Common myeloid progenitor, CD34-positive (primary cell): ENCODE measurements at regions of chr17 and their contacts with region 1.

Region 1: GRCh38 chr17:63406689-63407330 is 39.3 kb downstream of the CYB561 start:
- DNase-seq: peak; percentile 88 to 92 (median 88)
- H3K4me3 ChIP-seq: no peak overlapping the region
- H3K27ac ChIP-seq: no peak overlapping the region
- H3K4me1 ChIP-seq: peaks cover 0 to 5% (median 2%) of the 10 kb centered on the region in 4 experiments
- H3K27me3 ChIP-seq: no peaks in the 10 kb centered on the region

Region 2: GRCh38 chr17:63082273-63082993 is 324.4 kb before region 1 on chr17:
- CTCF ChIA-PET with region 1: interaction called, 26 read pairs
- POLR2A ChIA-PET with region 1: no interaction called
- DNase-seq: peak; percentile 40 to 68 (median 59)
- H3K4me3 ChIP-seq: no peak overlapping the region
- H3K27ac ChIP-seq: no peak overlapping the region
- H3K4me1 ChIP-seq: no peaks in the 10 kb centered on the region
- H3K27me3 ChIP-seq: no peaks in the 10 kb centered on the region

Region 3: DNA sequence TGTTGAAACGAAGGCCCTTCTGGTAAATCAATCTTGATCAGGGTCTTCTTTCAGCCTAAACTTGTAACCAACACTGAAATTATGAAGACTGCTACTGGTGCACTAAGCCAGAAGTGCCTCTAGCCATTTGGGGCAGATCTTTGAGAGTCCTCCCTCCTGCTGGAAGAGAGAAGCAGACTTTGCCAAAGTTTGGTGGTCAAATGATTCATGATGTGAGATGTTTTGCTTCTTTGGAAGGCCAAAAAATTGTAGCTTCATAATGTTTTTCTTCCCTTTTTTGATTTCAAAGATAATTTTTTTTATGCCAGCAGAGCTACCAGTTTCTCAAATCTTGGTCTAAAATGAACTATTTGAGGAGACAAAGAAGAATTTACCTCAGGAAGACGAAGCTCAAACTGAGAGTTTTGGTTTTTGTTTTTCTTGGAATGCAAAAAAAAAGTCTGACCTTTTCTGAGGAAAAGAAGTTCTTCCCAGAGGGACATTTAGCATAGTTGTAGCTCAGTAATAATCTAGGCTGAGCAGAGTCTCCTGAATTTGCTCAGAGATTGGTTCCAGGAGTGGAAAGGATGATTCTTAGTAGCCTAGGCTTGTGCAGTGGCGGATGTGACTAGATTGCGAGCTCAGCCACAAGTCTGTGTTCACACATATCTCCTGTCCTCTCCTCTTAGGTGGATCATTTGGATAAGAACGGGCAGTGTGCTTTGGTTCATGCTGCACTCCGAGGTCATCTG is 11.6 kb before region 1 on chr17:
- CTCF ChIA-PET with region 1: interaction called, 10 read pairs
- POLR2A ChIA-PET with region 1: no interaction called
- DNase-seq: peak in 2 of 3 donors; percentile 35 to 55
- H3K4me3 ChIP-seq: no peak overlapping the region
- H3K27ac ChIP-seq: no peak overlapping the region
- H3K4me1 ChIP-seq: peaks cover 0 to 29% (median 10%) of the 10 kb centered on the region in 4 experiments
- H3K27me3 ChIP-seq: no peaks in the 10 kb centered on the region

Region 4: DNA sequence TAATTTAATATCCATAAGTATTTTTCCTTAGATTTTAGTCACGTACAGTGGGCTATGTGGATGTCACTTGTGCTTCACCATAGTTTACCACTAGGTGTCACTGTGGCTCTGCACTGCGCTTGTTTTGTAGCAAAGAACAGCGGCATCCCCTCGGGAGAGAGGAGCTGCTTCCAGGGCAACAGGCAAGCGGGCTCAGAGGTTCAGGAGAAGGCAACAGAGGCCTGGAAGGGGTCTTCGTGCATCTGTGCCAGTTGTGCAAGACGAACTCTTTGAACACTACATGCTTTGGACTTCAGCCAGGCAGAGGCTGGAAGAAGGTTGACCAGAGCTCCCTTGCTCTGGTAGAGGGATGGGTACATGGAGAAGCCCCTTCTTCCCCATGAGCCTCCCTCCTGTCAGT is 18.7 kb after region 1 on chr17:
- CTCF ChIA-PET with region 1: interaction called, 76 read pairs
- POLR2A ChIA-PET with region 1: no interaction called
- DNase-seq: peak; percentile 81 to 89 (median 83)
- H3K4me3 ChIP-seq: peak overlapping the region in 2 of 7 experiments; percentile 14 to 37
- H3K27ac ChIP-seq: no peak overlapping the region
- H3K4me1 ChIP-seq: peaks cover 16 to 71% (median 69%) of the 10 kb centered on the region in 4 experiments
- H3K27me3 ChIP-seq: no peaks in the 10 kb centered on the region

Region 5: DNA sequence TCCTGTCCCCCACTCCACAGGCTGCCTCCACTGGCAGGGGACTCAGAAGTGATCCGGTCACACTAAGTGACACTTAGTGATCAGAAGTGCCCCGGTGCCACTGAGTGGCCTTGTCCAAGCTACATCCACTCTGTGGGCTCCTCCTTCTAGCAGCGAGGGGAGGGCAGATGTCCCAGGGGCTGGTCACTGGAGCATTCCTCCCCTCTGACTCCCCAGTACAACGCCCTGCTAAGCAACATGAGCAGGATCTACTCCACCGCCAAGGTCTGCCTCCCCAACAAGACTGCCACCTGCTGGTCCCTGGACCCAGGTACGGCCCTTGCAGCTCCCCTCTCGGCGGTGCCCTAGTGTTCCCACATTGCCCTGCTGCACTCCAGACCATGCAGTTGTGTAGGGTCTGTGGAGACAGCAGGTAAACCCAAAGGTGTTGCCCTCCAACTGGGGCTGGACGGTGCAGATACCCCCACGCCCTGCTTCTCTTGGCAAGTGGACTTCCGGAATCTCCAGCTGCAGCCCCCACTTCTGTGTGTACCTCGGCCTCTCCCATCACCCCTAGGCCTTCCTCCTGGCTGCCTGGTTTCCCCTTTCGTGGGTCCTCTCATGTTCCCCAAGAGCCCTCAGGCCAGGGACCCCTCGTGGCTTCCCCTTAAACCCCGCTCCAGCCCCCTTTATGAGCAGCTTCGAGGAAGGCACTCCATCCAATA is 72.1 kb after region 1 on chr17:
- CTCF ChIA-PET with region 1: interaction called, 12 read pairs
- POLR2A ChIA-PET with region 1: no interaction called
- DNase-seq: peak; percentile 84 to 91 (median 89)
- H3K4me3 ChIP-seq: peak overlapping the region in 1 of 7 experiments; percentile 28
- H3K27ac ChIP-seq: no peak overlapping the region
- H3K4me1 ChIP-seq: peaks cover 0 to 30% (median 29%) of the 10 kb centered on the region in 4 experiments
- H3K27me3 ChIP-seq: peaks cover 0 to 10% (median 0%) of the 10 kb centered on the region in 5 experiments